ENCODE measurements at regions of chr1 and their contacts with region 1.

Region 1: GRCh38 chr1:26431979-26432695 is at the start of gene DHDDS:
- DNase-seq: peak; percentile 95 to 98 (median 97)
- ATAC-seq: peak; percentile 99
- H3K4me3 ChIP-seq: peak within 1 kb of the TSS; percentile 88
- H3K4me3 Mint-ChIP-seq: peak within 1 kb of the TSS; percentile 92 to 99 (median 96)
- H3K27ac ChIP-seq: peak within 1 kb of the TSS; percentile 76
- H3K27ac Mint-ChIP-seq: peak within 1 kb of the TSS; percentile 90 to 99 (median 93)
- H3K4me1 ChIP-seq: peaks cover 11 to 15% of the 10 kb centered on the region in 2 donors
- H3K4me1 Mint-ChIP-seq: peaks cover 14 to 26% (median 22%) of the 10 kb centered on the region in 7 donors
- H3K27me3 ChIP-seq: no peaks in the 10 kb centered on the region
- H3K27me3 Mint-ChIP-seq: peaks cover 0 to 15% (median 0%) of the 10 kb centered on the region in 5 donors
- total RNA-seq, gene DHDDS: 28.1 to 58.9 (median 37.7) TPM

Region 2: DNA sequence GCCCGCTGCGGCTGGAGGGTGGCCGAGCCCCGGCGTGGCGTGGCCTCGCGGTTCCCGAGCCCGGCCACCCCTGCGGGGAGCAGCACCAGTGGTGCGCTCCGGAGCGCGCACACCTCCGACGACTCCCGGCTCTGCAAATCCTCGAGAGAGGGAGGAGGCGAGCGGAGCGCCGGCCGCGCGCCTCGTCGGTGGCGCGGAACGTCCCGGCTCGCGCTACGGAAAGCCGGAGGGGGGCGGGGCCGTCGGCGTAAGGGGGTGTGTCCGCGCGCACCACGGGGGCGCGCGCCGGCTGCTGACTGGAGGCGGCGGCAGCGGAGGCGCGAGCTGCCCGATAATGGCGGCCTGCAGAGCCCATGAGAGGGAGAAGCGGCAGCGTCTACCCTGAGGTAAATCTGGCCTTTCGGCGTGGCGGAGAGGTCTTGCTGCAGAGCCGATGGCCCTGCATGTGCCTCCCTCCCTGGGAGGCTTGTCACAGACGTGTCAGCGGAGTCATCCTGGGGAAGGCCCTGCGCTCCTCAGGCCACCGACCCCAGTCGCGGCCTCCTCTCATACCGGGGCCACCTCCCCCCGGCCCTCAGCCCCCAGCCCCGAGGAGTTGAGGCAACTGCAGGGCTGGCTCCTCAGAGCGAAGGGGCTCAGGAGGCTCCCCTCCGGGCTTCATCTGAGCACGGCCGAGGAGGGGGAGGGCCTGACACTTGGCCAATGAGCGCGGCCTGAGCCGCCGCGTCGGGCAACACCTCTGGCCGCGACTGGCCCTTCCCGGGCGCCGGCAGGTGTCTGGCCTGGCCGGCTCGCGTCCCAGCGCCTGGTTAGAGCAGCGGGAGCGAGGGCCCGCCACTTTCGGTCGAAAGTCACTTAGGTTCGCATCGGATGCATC is 320.4 kb before region 1 on chr1 and contains the start of gene PDIK1L:
- CTCF ChIA-PET with region 1: no interaction called
- POLR2A ChIA-PET with region 1: no interaction called
- intact Hi-C with region 1: loop called (anchors 1 kb)
- DNase-seq: peak; percentile 91 to 95 (median 94)
- ATAC-seq: peak; percentile 93
- H3K4me3 ChIP-seq: peak within 1 kb of the TSS; percentile 93
- H3K4me3 Mint-ChIP-seq: peak within 1 kb of the TSS; percentile 86 to 99 (median 93)
- H3K27ac ChIP-seq: peak within 1 kb of the TSS; percentile 84
- H3K27ac Mint-ChIP-seq: peak within 1 kb of the TSS; percentile 84 to 98 (median 92)
- H3K4me1 ChIP-seq: peaks cover 12 to 19% of the 10 kb centered on the region in 2 donors
- H3K4me1 Mint-ChIP-seq: peaks cover 6 to 44% (median 34%) of the 10 kb centered on the region in 7 donors
- H3K27me3 ChIP-seq: no peaks in the 10 kb centered on the region
- H3K27me3 Mint-ChIP-seq: no peaks in the 10 kb centered on the region
- total RNA-seq, gene PDIK1L: 9.1 to 29.6 (median 20.3) TPM

Region 3: DNA sequence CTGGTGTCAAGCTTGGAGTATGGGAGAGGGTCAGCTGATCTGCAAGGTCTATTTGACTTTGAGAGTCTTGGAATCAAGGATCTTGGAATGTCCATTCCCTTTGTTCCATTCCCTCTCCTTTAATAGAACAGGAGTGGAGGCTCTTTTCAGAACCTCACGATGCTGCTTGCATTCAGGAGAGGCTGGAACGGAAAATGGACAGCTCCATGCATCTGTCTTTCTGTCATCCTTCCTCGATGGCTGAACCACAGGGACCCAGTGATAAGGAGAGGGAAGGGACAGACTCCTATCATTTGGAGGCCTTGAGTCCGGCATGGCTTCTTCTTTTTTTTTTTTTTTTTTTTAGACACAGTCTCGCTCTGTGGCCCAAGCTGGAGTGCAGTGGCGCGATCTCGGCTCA is 36.4 kb before region 1 on chr1:
- CTCF ChIA-PET with region 1: no interaction called
- POLR2A ChIA-PET with region 1: no interaction called
- intact Hi-C with region 1: no loop called
- DNase-seq: no peak
- ATAC-seq: no peak
- H3K4me3 ChIP-seq: no peak overlapping the region
- H3K4me3 Mint-ChIP-seq: no peak overlapping the region
- H3K27ac ChIP-seq: no peak overlapping the region
- H3K27ac Mint-ChIP-seq: peak overlapping the region in 1 of 9 donors; percentile 59
- H3K4me1 ChIP-seq: peaks cover 6 to 7% of the 10 kb centered on the region in 2 donors
- H3K4me1 Mint-ChIP-seq: peaks cover 7 to 15% (median 10%) of the 10 kb centered on the region in 7 donors
- H3K27me3 ChIP-seq: no peaks in the 10 kb centered on the region
- H3K27me3 Mint-ChIP-seq: peaks cover 0 to 22% (median 0%) of the 10 kb centered on the region in 5 donors

Region 4: GRCh38 chr1:26408604-26409003 is 23.5 kb before region 1 on chr1:
- CTCF ChIA-PET with region 1: no interaction called
- POLR2A ChIA-PET with region 1: interaction called, 4 read pairs
- intact Hi-C with region 1: loop called in 1 of 2 experiments (anchors 1 kb)
- DNase-seq: peak; percentile 63 to 90 (median 75)
- ATAC-seq: peak; percentile 97
- H3K4me3 ChIP-seq: peak overlapping the region; percentile 11
- H3K4me3 Mint-ChIP-seq: peak overlapping the region; percentile 51 to 81 (median 73)
- H3K27ac ChIP-seq: no peak overlapping the region
- H3K27ac Mint-ChIP-seq: peak overlapping the region in 5 of 9 donors; percentile 20 to 77 (median 32)
- H3K4me1 ChIP-seq: peaks cover 10 to 18% of the 10 kb centered on the region in 2 donors
- H3K4me1 Mint-ChIP-seq: peaks cover 17 to 31% (median 21%) of the 10 kb centered on the region in 7 donors
- H3K27me3 ChIP-seq: peaks cover 10 to 13% of the 10 kb centered on the region in 2 donors
- H3K27me3 Mint-ChIP-seq: peaks cover 36 to 78% (median 51%) of the 10 kb centered on the region in 5 donors

Region 5: GRCh38 chr1:26516987-26517765 is 85.0 kb after region 1 on chr1:
- CTCF ChIA-PET with region 1: no interaction called
- POLR2A ChIA-PET with region 1: no interaction called
- intact Hi-C with region 1: no loop called
- DNase-seq: no peak
- ATAC-seq: no peak
- H3K4me3 ChIP-seq: no peak overlapping the region
- H3K4me3 Mint-ChIP-seq: no peak overlapping the region
- H3K27ac ChIP-seq: no peak overlapping the region
- H3K27ac Mint-ChIP-seq: no peak overlapping the region
- H3K4me1 ChIP-seq: no peaks in the 10 kb centered on the region
- H3K4me1 Mint-ChIP-seq: no peaks in the 10 kb centered on the region
- H3K27me3 ChIP-seq: no peaks in the 10 kb centered on the region
- H3K27me3 Mint-ChIP-seq: peaks cover 0 to 17% (median 0%) of the 10 kb centered on the region in 5 donors

Region 6: GRCh38 chr1:27915082-27915598 is 1483.0 kb after region 1 on chr1:
- CTCF ChIA-PET with region 1: no interaction called
- POLR2A ChIA-PET with region 1: no interaction called
- intact Hi-C with region 1: no loop called
- DNase-seq: no peak
- ATAC-seq: no peak
- H3K4me3 ChIP-seq: peak overlapping the region; percentile 92
- H3K4me3 Mint-ChIP-seq: peak overlapping the region; percentile 95 to 100 (median 99)
- H3K27ac ChIP-seq: peak overlapping the region; percentile 91
- H3K27ac Mint-ChIP-seq: peak overlapping the region; percentile 95 to 100 (median 99)
- H3K4me1 ChIP-seq: peaks cover 0 to 5% of the 10 kb centered on the region in 2 donors
- H3K4me1 Mint-ChIP-seq: peaks cover 0 to 27% (median 23%) of the 10 kb centered on the region in 7 donors
- H3K27me3 ChIP-seq: no peaks in the 10 kb centered on the region
- H3K27me3 Mint-ChIP-seq: peaks cover 0 to 21% (median 0%) of the 10 kb centered on the region in 5 donors

Measured in naive thymus-derived CD4-positive, alpha-beta T cell (primary cell).